Naive thymus-derived CD4-positive, alpha-beta T cell (primary cell): ENCODE measurements at regions of chr20 and their contacts with region 1.

Region 1: GRCh38 chr20:33666293-33667244 is at the start of gene ACTL10:
- DNase-seq: peak; percentile 45 to 86 (median 60)
- ATAC-seq: peak; percentile 79
- H3K4me3 ChIP-seq: peak within 1 kb of the TSS; percentile 79
- H3K4me3 Mint-ChIP-seq: peak within 1 kb of the TSS; percentile 95 to 100 (median 98)
- H3K27ac ChIP-seq: peak within 1 kb of the TSS; percentile 60
- H3K27ac Mint-ChIP-seq: peak within 1 kb of the TSS; percentile 90 to 98 (median 95)
- H3K4me1 ChIP-seq: peaks cover 19 to 21% of the 10 kb centered on the region in 2 donors
- H3K4me1 Mint-ChIP-seq: peaks cover 21 to 54% (median 35%) of the 10 kb centered on the region in 7 donors
- H3K27me3 ChIP-seq: no peaks in the 10 kb centered on the region
- H3K27me3 Mint-ChIP-seq: no peaks in the 10 kb centered on the region
- total RNA-seq, gene ACTL10: 0.66 to 4.9 (median 3.2) TPM

Region 2: GRCh38 chr20:33443512-33444239 is 222.9 kb before region 1 on chr20 and contains the start of gene SNTA1:
- CTCF ChIA-PET with region 1: interaction called, 7 read pairs
- POLR2A ChIA-PET with region 1: interaction called, 4 read pairs
- intact Hi-C with region 1: loop called (anchors 1 to 2 kb)
- DNase-seq: peak; percentile 51 to 90 (median 70)
- ATAC-seq: peak; percentile 84
- H3K4me3 ChIP-seq: peak within 1 kb of the TSS; percentile 96
- H3K4me3 Mint-ChIP-seq: peak within 1 kb of the TSS; percentile 82 to 96 (median 92)
- H3K27ac ChIP-seq: peak within 1 kb of the TSS; percentile 62
- H3K27ac Mint-ChIP-seq: peak within 1 kb of the TSS; percentile 69 to 95 (median 90)
- H3K4me1 ChIP-seq: peaks cover 10 to 11% of the 10 kb centered on the region in 2 donors
- H3K4me1 Mint-ChIP-seq: peaks cover 16 to 32% (median 22%) of the 10 kb centered on the region in 7 donors
- H3K27me3 ChIP-seq: no peaks in the 10 kb centered on the region
- H3K27me3 Mint-ChIP-seq: peaks cover 0 to 19% (median 0%) of the 10 kb centered on the region in 5 donors
- total RNA-seq, gene SNTA1: 2.0 to 3.2 (median 2.9) TPM

Region 3: DNA sequence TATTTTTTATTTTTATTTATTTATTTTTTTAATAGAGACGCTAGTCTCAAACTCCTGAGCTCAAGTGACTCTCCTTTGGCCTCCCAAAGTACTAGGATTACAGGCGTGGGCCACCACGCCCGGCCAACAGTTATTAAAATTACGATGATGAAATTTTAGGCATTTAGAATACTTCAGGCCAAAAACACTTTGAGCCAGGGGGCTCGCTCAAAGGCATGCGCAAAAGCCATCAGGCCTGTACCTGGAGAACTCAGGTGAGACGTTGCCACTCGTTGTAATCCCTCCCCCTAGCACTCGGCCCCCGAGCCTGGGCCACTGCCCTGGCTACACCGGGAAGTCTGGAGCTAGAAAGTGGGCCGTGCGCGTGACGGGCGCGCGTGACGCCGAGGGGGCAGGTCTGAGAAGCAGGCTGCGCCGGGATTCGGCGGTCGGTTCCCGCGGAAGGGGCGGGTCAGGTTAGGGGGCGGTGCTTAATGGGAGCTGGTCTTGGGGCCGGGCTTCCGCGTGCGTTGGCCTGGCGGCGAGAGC is 177.0 kb before region 1 on chr20:
- CTCF ChIA-PET with region 1: interaction called, 8 read pairs
- POLR2A ChIA-PET with region 1: interaction called, 31 read pairs
- intact Hi-C with region 1: loop called (anchors 1 kb)
- DNase-seq: peak; percentile 97 to 99 (median 99)
- ATAC-seq: peak; percentile 97
- H3K4me3 ChIP-seq: peak overlapping the region; percentile 75
- H3K4me3 Mint-ChIP-seq: peak overlapping the region; percentile 84 to 95 (median 88)
- H3K27ac ChIP-seq: peak overlapping the region; percentile 94
- H3K27ac Mint-ChIP-seq: peak overlapping the region; percentile 86 to 96 (median 90)
- H3K4me1 ChIP-seq: peaks cover 4 to 9% of the 10 kb centered on the region in 2 donors
- H3K4me1 Mint-ChIP-seq: peaks cover 0 to 30% (median 13%) of the 10 kb centered on the region in 7 donors
- H3K27me3 ChIP-seq: no peaks in the 10 kb centered on the region
- H3K27me3 Mint-ChIP-seq: no peaks in the 10 kb centered on the region

Region 4: DNA sequence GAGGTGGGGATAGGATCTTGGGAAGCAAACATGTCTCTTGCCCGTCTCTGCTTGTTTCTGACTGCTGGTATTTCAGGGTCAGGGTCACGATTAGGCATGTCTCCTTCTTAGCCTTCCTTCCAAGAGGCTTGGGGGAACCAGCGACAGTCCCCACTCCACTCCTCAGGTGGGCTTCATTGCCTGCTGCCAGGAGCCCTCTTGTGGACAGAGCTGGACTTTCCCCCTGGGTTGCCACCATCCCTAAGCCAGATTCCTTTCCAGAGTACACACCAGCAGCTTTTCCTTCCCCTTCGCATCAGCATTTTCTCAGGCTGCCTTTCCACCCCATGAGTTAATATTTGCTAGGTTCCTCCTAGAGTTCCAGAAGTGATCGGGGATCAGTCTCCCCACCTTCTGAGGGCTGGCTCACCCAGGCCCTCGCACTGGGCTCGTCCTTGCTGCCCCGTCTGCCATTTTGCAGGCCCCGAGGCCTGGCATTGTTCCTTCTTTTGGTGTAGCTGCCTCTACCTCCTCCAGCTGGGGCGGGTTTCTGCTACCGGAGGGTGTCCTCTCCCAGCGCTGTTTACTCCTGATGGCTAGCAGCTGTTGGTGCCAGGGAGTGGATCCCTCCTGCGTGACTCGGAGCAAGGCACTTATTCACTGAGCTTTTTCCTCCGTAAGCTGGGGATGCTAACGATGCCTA is 13.2 kb before region 1 on chr20:
- CTCF ChIA-PET with region 1: interaction called, 9 read pairs
- POLR2A ChIA-PET with region 1: interaction called, 12 read pairs
- intact Hi-C with region 1: loop called in 1 of 2 experiments (anchors 1 kb)
- DNase-seq: peak in 4 of 9 donors; percentile 14 to 30 (median 27)
- ATAC-seq: peak; percentile 72
- H3K4me3 ChIP-seq: no peak overlapping the region
- H3K4me3 Mint-ChIP-seq: no peak overlapping the region
- H3K27ac ChIP-seq: no peak overlapping the region
- H3K27ac Mint-ChIP-seq: peak overlapping the region in 1 of 9 donors; percentile 41
- H3K4me1 ChIP-seq: no peaks in the 10 kb centered on the region
- H3K4me1 Mint-ChIP-seq: peaks cover 0 to 10% (median 3%) of the 10 kb centered on the region in 7 donors
- H3K27me3 ChIP-seq: no peaks in the 10 kb centered on the region
- H3K27me3 Mint-ChIP-seq: no peaks in the 10 kb centered on the region

Region 5: DNA sequence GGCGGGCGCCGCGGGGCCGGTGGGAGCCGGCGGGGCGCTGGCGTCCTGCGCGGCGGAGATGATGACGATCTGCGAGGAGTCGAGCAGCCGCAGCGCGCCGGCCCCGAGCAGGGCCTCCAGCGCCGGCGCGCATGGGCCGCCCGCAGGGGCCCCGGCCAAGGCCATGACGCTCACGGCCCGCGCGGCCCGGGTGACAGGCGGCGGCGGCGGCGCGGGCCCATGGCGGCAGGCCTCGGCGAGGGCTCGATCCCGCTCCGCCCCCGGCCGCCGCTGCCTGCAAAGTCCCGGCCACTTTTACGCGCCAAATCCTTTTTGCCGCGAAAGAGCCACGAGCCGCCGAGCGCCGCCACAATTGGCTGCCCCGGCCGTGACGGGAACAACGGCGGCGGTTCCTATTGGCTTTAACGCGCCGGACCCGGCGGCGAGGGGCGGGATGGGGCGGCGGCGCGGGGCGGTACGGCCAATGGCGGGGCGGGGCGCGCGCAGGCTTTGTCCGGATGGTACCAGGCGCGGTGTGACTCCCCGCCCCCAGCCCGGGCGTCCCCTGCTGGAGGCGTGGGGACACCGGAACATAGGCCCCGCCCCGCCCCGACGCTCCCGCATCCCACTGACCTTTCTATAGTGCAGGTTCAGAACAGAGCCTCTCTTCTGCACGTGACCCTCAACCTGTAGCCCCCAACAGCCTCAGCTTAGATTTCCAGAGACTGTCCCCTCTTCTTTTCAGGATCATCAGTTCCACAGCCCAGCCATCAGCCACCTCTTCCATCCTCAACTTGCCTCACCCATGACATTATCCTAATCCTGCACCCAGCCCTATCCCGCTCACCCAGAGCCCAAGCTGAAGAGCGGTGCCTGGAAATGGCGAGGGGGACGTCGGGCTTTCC is 19.8 kb after region 1 on chr20 and contains the start of gene E2F1:
- CTCF ChIA-PET with region 1: interaction called, 33 read pairs
- POLR2A ChIA-PET with region 1: interaction called, 75 read pairs
- intact Hi-C with region 1: loop called (anchors 1 kb)
- DNase-seq: peak; percentile 85 to 98 (median 90)
- ATAC-seq: peak; percentile 98
- H3K4me3 ChIP-seq: peak within 1 kb of the TSS; percentile 55
- H3K4me3 Mint-ChIP-seq: peak within 1 kb of the TSS; percentile 74 to 95 (median 84)
- H3K27ac ChIP-seq: peak within 1 kb of the TSS; percentile 59
- H3K27ac Mint-ChIP-seq: peak within 1 kb of the TSS; percentile 6 to 95 (median 84)
- H3K4me1 ChIP-seq: peaks cover 3 to 27% of the 10 kb centered on the region in 2 donors
- H3K4me1 Mint-ChIP-seq: peaks cover 11 to 72% (median 38%) of the 10 kb centered on the region in 7 donors
- H3K27me3 ChIP-seq: no peaks in the 10 kb centered on the region
- H3K27me3 Mint-ChIP-seq: no peaks in the 10 kb centered on the region
- total RNA-seq, gene E2F1: 0.98 to 61.6 (median 1.6) TPM

Region 6: DNA sequence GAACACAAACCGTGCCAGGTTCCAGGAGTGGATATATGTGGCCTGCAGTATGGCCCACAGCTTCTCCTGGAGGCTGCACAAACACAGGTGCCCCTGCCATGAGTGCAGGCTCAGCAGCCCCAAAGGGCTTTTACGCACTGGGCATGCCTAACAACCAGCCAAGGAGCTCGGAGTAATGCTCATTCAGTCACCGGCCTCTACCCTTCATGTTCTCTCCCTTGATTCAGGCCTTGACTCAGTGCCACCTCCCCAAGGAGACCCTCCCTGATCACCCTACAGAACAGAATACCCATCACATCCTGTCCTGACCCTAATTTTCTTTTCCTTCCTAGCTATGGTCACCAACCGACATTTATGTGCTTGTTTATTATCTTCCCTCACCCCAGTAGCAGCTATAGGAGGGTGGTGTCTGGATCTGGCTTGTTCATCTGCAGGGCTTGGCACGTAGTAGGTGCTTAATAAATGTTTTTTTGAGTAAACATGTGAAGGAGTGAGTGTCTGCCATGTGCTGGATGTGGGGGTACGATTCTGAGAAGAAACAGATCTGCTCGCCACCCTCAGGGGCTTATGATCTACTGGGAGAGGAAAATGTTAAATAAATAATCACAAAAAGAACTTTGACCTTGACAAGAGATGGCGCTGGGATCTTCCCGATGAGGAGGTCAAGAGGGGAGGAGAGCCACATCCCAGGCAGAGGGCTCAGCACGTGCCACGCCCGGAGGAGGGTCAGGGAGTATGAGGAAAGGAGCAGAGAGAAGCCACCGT is 44.3 kb after region 1 on chr20:
- CTCF ChIA-PET with region 1: no interaction called
- POLR2A ChIA-PET with region 1: no interaction called
- intact Hi-C with region 1: no loop called
- DNase-seq: no peak
- ATAC-seq: no peak
- H3K4me3 ChIP-seq: no peak overlapping the region
- H3K4me3 Mint-ChIP-seq: no peak overlapping the region
- H3K27ac ChIP-seq: no peak overlapping the region
- H3K27ac Mint-ChIP-seq: peak overlapping the region in 4 of 9 donors; percentile 9 to 63 (median 33)
- H3K4me1 ChIP-seq: no peaks in the 10 kb centered on the region
- H3K4me1 Mint-ChIP-seq: peaks cover 6 to 25% (median 9%) of the 10 kb centered on the region in 7 donors
- H3K27me3 ChIP-seq: no peaks in the 10 kb centered on the region
- H3K27me3 Mint-ChIP-seq: no peaks in the 10 kb centered on the region

Region 7: GRCh38 chr20:33731693-33732165 is 65.2 kb after region 1 on chr20 and contains the start of gene ZNF341:
- CTCF ChIA-PET with region 1: interaction called, 3 read pairs
- POLR2A ChIA-PET with region 1: interaction called, 20 read pairs
- intact Hi-C with region 1: loop called (anchors 1 to 5 kb)
- DNase-seq: peak in 7 of 9 donors; percentile 84 to 92 (median 88)
- ATAC-seq: peak; percentile 92
- H3K4me3 ChIP-seq: peak within 1 kb of the TSS; percentile 84
- H3K4me3 Mint-ChIP-seq: peak within 1 kb of the TSS; percentile 82 to 97 (median 90)
- H3K27ac ChIP-seq: peak within 1 kb of the TSS; percentile 75
- H3K27ac Mint-ChIP-seq: peak within 1 kb of the TSS; percentile 90 to 98 (median 97)
- H3K4me1 ChIP-seq: peaks cover 3 to 18% of the 10 kb centered on the region in 2 donors
- H3K4me1 Mint-ChIP-seq: peaks cover 12 to 36% (median 20%) of the 10 kb centered on the region in 7 donors
- H3K27me3 ChIP-seq: no peaks in the 10 kb centered on the region
- H3K27me3 Mint-ChIP-seq: peaks cover 0 to 3% (median 0%) of the 10 kb centered on the region in 5 donors
- total RNA-seq, gene ZNF341: 3.5 to 6.1 (median 5.5) TPM

Region 8: DNA sequence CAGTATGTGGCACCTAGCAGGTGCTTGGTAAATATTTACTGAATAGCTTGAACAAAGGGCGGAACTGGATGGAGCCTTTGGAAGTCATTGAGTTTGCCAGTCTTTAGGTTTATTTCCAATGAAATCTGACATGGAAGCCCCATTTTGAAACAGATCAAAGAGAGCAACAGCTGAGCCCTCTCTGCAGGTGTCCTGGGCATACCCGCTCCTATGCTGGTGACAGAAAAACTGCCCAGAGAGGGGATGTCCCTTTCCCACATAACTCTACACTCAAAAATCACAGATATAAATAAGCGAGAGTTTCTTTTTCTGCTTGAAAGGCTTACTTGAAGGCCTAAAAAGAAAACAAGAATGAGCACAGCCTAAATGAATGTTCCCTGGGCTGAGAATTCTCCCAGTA is 274.1 kb after region 1 on chr20:
- CTCF ChIA-PET with region 1: no interaction called
- POLR2A ChIA-PET with region 1: no interaction called
- intact Hi-C with region 1: no loop called
- DNase-seq: no peak
- ATAC-seq: no peak
- H3K4me3 ChIP-seq: no peak overlapping the region
- H3K4me3 Mint-ChIP-seq: no peak overlapping the region
- H3K27ac ChIP-seq: no peak overlapping the region
- H3K27ac Mint-ChIP-seq: peak overlapping the region in 1 of 9 donors; percentile 20
- H3K4me1 ChIP-seq: no peaks in the 10 kb centered on the region
- H3K4me1 Mint-ChIP-seq: no peaks in the 10 kb centered on the region
- H3K27me3 ChIP-seq: no peaks in the 10 kb centered on the region
- H3K27me3 Mint-ChIP-seq: no peaks in the 10 kb centered on the region

Region 9: GRCh38 chr20:34069341-34070078 is 402.9 kb after region 1 on chr20:
- CTCF ChIA-PET with region 1: no interaction called
- POLR2A ChIA-PET with region 1: no interaction called
- intact Hi-C with region 1: loop called in 1 of 2 experiments (anchors 5 kb)
- DNase-seq: peak in 8 of 9 donors; percentile 30 to 64 (median 53)
- ATAC-seq: peak; percentile 90
- H3K4me3 ChIP-seq: no peak overlapping the region
- H3K4me3 Mint-ChIP-seq: no peak overlapping the region
- H3K27ac ChIP-seq: peak overlapping the region; percentile 22
- H3K27ac Mint-ChIP-seq: peak overlapping the region in 7 of 9 donors; percentile 10 to 81 (median 41)
- H3K4me1 ChIP-seq: peaks cover 5 to 12% of the 10 kb centered on the region in 2 donors
- H3K4me1 Mint-ChIP-seq: peaks cover 29 to 51% (median 38%) of the 10 kb centered on the region in 7 donors
- H3K27me3 ChIP-seq: no peaks in the 10 kb centered on the region
- H3K27me3 Mint-ChIP-seq: no peaks in the 10 kb centered on the region